Activated CD4-positive, alpha-beta T cell treated with anti-CD3 and anti-CD28 coated beads, Interleukin-2, amount 10 ng/mL, durations not matched to agents 24 days and 14 days (primary cell): ENCODE measurements at regions of chr10 and their contacts with region 1.

Region 1: GRCh38 chr10:13348216-13349017 is at the start of gene SEPHS1:
- DNase-seq: peak; percentile 94
- H3K4me3 Mint-ChIP-seq: peak within 1 kb of the TSS; percentile 87
- H3K27ac Mint-ChIP-seq: peak within 1 kb of the TSS; percentile 95
- H3K4me1 Mint-ChIP-seq: peaks cover 49% of the 10 kb centered on the region
- H3K27me3 Mint-ChIP-seq: no peaks in the 10 kb centered on the region
- total RNA-seq, gene SEPHS1: 59.9 and 64.2 TPM in 2 replicates

Region 2: GRCh38 chr10:13099666-13100348 is 248.6 kb before region 1 on chr10 and contains the start of gene OPTN:
- intact Hi-C with region 1: loop called (anchors 2 kb)
- DNase-seq: peak; percentile 93
- H3K4me3 Mint-ChIP-seq: peak within 1 kb of the TSS; percentile 92
- H3K27ac Mint-ChIP-seq: peak within 1 kb of the TSS; percentile 92
- H3K4me1 Mint-ChIP-seq: peaks cover 46% of the 10 kb centered on the region
- H3K27me3 Mint-ChIP-seq: no peaks in the 10 kb centered on the region
- total RNA-seq, gene OPTN: 39.5 and 43.6 TPM in 2 replicates

Region 3: GRCh38 chr10:13311177-13311575 is 37.2 kb before region 1 on chr10:
- intact Hi-C with region 1: no loop called
- DNase-seq: no peak
- H3K4me3 Mint-ChIP-seq: no peak overlapping the region
- H3K27ac Mint-ChIP-seq: no peak overlapping the region
- H3K4me1 Mint-ChIP-seq: no peaks in the 10 kb centered on the region
- H3K27me3 Mint-ChIP-seq: no peaks in the 10 kb centered on the region